GM13977 (cell line): ENCODE measurements at regions of chr18 and their contacts with region 1.

Region 1: DNA sequence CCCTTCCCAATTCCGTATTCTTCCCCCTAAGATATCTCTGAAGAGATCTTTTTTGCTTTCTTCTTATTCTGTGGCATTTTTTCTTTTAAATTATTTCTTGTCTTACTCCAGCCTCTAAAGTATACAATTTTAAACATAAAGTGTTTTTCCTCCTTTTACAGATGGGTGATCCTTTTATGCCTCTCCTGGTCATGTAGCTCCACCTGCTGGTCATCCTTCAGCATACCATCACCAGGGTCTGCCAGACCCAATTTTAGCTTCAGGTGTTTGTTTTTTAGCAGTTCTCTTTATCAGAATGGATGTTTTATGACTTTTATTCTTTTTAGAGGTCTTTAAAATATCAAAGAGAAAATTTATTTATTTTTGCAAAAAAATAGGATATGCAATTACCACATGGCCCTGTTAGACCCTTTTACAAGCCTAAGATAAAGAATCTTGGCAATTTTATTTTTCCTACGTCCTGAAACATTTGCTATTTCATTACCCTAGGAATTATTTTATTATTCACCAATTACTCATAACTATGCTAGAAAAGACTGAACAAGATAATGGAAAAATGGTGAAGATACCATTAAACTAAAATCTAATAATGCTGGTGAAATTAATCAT is 55.5 kb downstream of the PIGN start:
- DNase-seq: peak; percentile 27
- CTCF ChIP-seq: peak; percentile 83

Region 2: GRCh38 chr18:61333271-61333745 is 798.1 kb before region 1 on chr18 and contains the start of gene CDH20:
- in situ Hi-C with region 1: no loop called
- DNase-seq: no peak
- CTCF ChIP-seq: no peak

Region 3: GRCh38 chr18:61581578-61582201 is 549.7 kb before region 1 on chr18:
- in situ Hi-C with region 1: loop called (anchors 25 kb)
- DNase-seq: peak; percentile 71
- CTCF ChIP-seq: peak; percentile 90

Region 4: DNA sequence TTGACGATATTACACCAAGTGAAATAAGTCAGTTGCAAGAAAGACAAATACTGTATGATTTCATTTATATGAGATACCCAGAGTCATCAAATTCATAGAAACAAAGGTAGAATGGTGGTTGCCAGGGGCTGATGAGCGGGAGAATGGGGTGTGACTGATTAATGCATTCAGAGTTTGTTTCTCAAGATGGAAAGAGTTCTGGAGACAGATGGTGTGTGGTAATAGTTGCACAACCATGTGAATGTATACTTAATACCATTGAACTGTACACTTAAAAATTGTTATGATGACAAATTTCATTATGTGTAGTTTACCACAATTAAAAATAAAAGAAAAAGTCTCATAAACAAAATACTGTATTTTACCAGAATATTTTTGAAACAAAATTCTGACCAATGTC is 61.8 kb before region 1 on chr18:
- in situ Hi-C with region 1: no loop called
- DNase-seq: no peak
- CTCF ChIP-seq: no peak

Region 5: DNA sequence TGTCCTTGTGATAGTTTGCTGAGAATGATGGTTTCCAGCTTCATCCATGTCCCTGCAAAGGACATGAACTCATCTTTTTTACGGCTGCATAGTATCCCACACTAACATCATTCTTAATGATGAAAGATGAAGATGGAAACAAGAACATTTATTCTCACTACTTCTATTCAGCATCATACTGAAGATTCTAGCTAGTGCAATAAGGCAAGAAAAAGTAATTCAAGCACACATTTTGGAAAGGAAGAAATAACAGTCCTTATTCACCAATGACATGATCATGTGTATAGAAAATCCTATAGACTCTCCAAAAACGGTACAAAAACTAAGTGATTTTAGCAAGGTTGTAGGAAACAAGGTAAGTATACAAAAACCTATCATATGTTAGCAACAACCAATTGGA is 92.8 kb after region 1 on chr18:
- in situ Hi-C with region 1: no loop called
- DNase-seq: no peak
- CTCF ChIP-seq: no peak